ENCODE measurements at regions of chr1 and their contacts with region 1.

Region 1: GRCh38 chr1:116485071-116485735 is 85.6 kb downstream of the CD58 start:
- DNase-seq: peak; percentile 67
- H3K4me3 Mint-ChIP-seq: no peak overlapping the region
- H3K27ac Mint-ChIP-seq: no peak overlapping the region
- H3K4me1 Mint-ChIP-seq: peaks cover 11% of the 10 kb centered on the region
- H3K27me3 Mint-ChIP-seq: no peaks in the 10 kb centered on the region

Region 2: DNA sequence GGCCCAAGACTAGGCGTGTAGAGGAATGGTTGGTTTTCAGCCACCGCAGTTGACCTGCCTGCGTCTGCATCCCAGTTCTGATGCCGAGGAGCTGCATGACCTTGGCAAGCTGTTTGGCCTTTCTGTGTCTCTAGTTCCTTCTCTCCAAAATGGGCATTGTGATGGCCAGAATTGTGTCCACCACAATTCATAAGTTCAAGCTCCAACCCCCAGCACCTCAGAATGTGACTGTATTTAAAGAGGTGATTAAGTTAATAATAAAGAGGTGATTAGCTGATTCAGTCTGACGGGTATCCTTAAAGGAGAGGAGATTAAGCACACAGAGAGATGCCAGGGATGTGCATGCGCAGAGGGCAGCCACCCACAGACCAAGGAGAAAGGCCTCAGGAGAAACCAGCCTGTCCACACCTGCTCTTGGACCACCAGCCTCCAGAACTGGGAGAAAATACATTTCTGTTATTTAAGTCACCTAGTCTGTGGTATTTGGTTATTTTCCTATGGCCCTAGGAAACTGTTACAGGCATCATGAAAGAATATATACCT is 345.5 kb before region 1 on chr1:
- intact Hi-C with region 1: loop called (anchors 1 kb)
- DNase-seq: no peak
- H3K4me3 Mint-ChIP-seq: no peak overlapping the region
- H3K27ac Mint-ChIP-seq: no peak overlapping the region
- H3K4me1 Mint-ChIP-seq: peaks cover 7% of the 10 kb centered on the region
- H3K27me3 Mint-ChIP-seq: peaks cover 14% of the 10 kb centered on the region

Region 3: DNA sequence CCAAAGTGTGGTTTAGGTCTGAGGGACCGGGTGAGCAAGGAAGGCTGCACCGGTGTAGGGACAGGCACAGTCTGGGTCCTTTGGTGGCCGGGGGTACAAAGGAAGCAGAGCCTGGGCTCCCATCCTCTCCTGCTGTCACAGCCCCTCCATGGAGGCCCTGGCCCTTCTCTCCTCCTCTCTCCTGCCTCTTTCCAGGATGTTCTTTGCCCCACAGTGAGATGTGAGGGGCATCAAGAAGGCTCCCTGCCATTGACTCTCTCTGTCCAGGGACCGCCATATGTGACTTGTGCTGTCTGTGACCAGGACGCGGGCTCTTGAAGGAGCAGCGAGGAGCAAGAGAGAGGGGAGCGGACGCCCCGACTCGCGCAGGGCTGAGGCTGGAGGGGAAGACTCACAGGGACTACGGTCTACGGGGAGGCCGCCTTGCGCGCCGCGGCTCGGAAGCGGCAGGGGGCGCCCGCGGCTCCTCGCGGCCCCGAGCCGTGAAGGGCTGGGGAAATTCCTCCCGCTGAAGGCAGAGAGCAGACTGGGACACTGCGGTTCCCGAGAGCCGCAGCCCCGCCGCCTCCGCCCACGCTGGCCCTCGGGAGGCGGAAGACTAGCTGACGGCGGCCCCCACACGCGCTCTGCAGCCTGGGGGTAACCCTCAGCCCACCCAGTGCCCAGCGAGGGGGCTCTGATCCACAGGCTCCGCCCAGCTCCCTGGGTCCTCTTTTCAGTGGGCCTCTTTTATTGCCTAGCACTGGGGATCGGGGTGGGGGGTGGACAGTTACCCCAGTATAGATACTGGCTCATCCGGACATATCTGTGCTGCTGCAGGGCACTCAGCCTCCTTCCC is 333.2 kb before region 1 on chr1:
- intact Hi-C with region 1: loop called (anchors 1 kb)
- DNase-seq: peak; percentile 68
- H3K4me3 Mint-ChIP-seq: peak overlapping the region; percentile 20
- H3K27ac Mint-ChIP-seq: peak overlapping the region; percentile 50
- H3K4me1 Mint-ChIP-seq: peaks cover 11% of the 10 kb centered on the region
- H3K27me3 Mint-ChIP-seq: peaks cover 32% of the 10 kb centered on the region

Region 4: GRCh38 chr1:116360429-116361173 is 124.6 kb before region 1 on chr1:
- intact Hi-C with region 1: loop called (anchors 1 kb)
- DNase-seq: no peak
- H3K4me3 Mint-ChIP-seq: no peak overlapping the region
- H3K27ac Mint-ChIP-seq: no peak overlapping the region
- H3K4me1 Mint-ChIP-seq: peaks cover 2% of the 10 kb centered on the region
- H3K27me3 Mint-ChIP-seq: peaks cover 21% of the 10 kb centered on the region

Region 5: GRCh38 chr1:116498789-116499628 is 13.8 kb after region 1 on chr1:
- intact Hi-C with region 1: loop called (anchors 1 kb)
- DNase-seq: no peak
- H3K4me3 Mint-ChIP-seq: no peak overlapping the region
- H3K27ac Mint-ChIP-seq: no peak overlapping the region
- H3K4me1 Mint-ChIP-seq: peaks cover 36% of the 10 kb centered on the region
- H3K27me3 Mint-ChIP-seq: no peaks in the 10 kb centered on the region

Measured in activated T-helper 2 cell treated with anti-CD3 and anti-CD28 coated beads, Interferon-gamma antibody, Interleukin-2, Interleukin-4, amounts not matched to agents 10 μg/mL and 5 μg/mL and 100 μg/mL, durations not matched to agents 14 hours and 24 hours and 36 hours (primary cell).